ENCODE measurements at regions of chr6 and their contacts with region 1.

Region 1: GRCh38 chr6:28335564-28336283 is at the start of gene ZSCAN31:
- DNase-seq: peak; percentile 99
- ATAC-seq: peak; percentile 98
- H3K4me3 ChIP-seq: peak within 1 kb of the TSS; percentile 78 to 94 (median 80)
- H3K27ac ChIP-seq: peak within 1 kb of the TSS; percentile 96
- H3K4me1 ChIP-seq: peaks cover 25% of the 10 kb centered on the region
- H3K27me3 ChIP-seq: no peaks in the 10 kb centered on the region; a peak in 1 of 5 replicates
- CTCF ChIP-seq: no peak; the same call in 1 of the 2 replicates
- EP300 ChIP-seq: peak; percentile 18 to 34; a peak in 1 of 4 replicates
- POLR2A ChIP-seq: peak; percentile 80 to 99
- RAD21 ChIP-seq: 0 out of 2 replicates have a peak, but pooled peaks have one; percentile 17
- total RNA-seq, gene ZSCAN31: 6.2 and 7.2 TPM in 2 replicates

Region 2: GRCh38 chr6:28161410-28162079 is 174.2 kb before region 1 on chr6:
- CTCF ChIA-PET with region 1: no interaction called
- POLR2A ChIA-PET with region 1: interaction called, 12 read pairs
- in situ Hi-C with region 1: no loop called
- intact Hi-C with region 1: no loop called
- DNase-seq: peak; percentile 79
- ATAC-seq: peak; percentile 98
- H3K4me3 ChIP-seq: peak overlapping the region; percentile 65 to 82 (median 74)
- H3K27ac ChIP-seq: peak overlapping the region; percentile 50
- H3K4me1 ChIP-seq: peaks cover 13% of the 10 kb centered on the region
- H3K27me3 ChIP-seq: no peaks in the 10 kb centered on the region; a peak in 1 of 5 replicates
- CTCF ChIP-seq: peak; percentile 13; the same call in 1 of the 2 replicates
- EP300 ChIP-seq: no peak
- POLR2A ChIP-seq: peak; percentile 92 to 99
- RAD21 ChIP-seq: peak; percentile 56

Region 3: DNA sequence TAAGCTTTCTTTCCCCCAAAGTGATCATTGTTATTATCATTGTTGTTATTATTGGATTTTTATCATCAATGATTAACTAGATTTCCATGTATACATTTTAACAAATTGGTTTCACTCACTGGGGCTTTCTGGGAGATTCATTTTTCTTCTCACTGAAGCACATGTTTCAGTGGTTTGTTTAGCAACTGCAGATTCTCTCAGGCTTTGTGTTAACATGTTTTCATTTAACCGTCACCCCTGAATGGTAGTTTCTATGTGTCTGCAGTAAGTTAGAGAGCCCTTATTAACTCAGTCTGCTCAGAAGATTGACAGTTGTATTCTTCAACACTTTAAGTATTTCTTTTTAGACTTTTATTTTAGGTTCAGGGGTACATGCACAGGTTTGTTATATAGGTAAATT is 96.1 kb before region 1 on chr6:
- CTCF ChIA-PET with region 1: no interaction called
- POLR2A ChIA-PET with region 1: no interaction called
- in situ Hi-C with region 1: no loop called
- intact Hi-C with region 1: no loop called
- DNase-seq: no peak
- ATAC-seq: no peak
- H3K4me3 ChIP-seq: no peak overlapping the region
- H3K27ac ChIP-seq: no peak overlapping the region
- H3K4me1 ChIP-seq: no peaks in the 10 kb centered on the region
- H3K27me3 ChIP-seq: no peaks in the 10 kb centered on the region
- CTCF ChIP-seq: no peak
- EP300 ChIP-seq: no peak
- POLR2A ChIP-seq: no peak
- RAD21 ChIP-seq: no peak

Region 4: GRCh38 chr6:28281288-28282064 is 54.2 kb before region 1 on chr6 and contains the start of gene PGBD1:
- CTCF ChIA-PET with region 1: no interaction called
- POLR2A ChIA-PET with region 1: interaction called, 24 read pairs
- in situ Hi-C with region 1: no loop called
- intact Hi-C with region 1: no loop called
- DNase-seq: peak; percentile 67
- ATAC-seq: peak; percentile 99
- H3K4me3 ChIP-seq: peak within 1 kb of the TSS; percentile 79 to 94 (median 89)
- H3K27ac ChIP-seq: peak within 1 kb of the TSS; percentile 42
- H3K4me1 ChIP-seq: peaks cover 16% of the 10 kb centered on the region
- H3K27me3 ChIP-seq: no peaks in the 10 kb centered on the region; a peak in 1 of 5 replicates
- CTCF ChIP-seq: peak; percentile 39
- EP300 ChIP-seq: peak in 1 of 2 experiments; percentile 5; a peak in 1 of 4 replicates
- POLR2A ChIP-seq: peak; percentile 71 to 72
- RAD21 ChIP-seq: peak; percentile 76
- total RNA-seq, gene PGBD1: 6.9 and 8.5 TPM in 2 replicates

Region 5: GRCh38 chr6:28322661-28323060 is 13.1 kb before region 1 on chr6:
- CTCF ChIA-PET with region 1: no interaction called
- POLR2A ChIA-PET with region 1: interaction called, 108 read pairs
- in situ Hi-C with region 1: no loop called
- intact Hi-C with region 1: loop called (anchors 1 kb)
- DNase-seq: peak; percentile 62
- ATAC-seq: peak; percentile 12; the same call in 1 of the 3 replicates
- H3K4me3 ChIP-seq: no peak overlapping the region
- H3K27ac ChIP-seq: no peak overlapping the region
- H3K4me1 ChIP-seq: peaks cover 36% of the 10 kb centered on the region
- H3K27me3 ChIP-seq: no peaks in the 10 kb centered on the region
- CTCF ChIP-seq: no peak
- EP300 ChIP-seq: peak in 1 of 2 experiments; percentile 59; a peak in 2 of 4 replicates
- POLR2A ChIP-seq: no peak
- RAD21 ChIP-seq: no peak

Region 6: DNA sequence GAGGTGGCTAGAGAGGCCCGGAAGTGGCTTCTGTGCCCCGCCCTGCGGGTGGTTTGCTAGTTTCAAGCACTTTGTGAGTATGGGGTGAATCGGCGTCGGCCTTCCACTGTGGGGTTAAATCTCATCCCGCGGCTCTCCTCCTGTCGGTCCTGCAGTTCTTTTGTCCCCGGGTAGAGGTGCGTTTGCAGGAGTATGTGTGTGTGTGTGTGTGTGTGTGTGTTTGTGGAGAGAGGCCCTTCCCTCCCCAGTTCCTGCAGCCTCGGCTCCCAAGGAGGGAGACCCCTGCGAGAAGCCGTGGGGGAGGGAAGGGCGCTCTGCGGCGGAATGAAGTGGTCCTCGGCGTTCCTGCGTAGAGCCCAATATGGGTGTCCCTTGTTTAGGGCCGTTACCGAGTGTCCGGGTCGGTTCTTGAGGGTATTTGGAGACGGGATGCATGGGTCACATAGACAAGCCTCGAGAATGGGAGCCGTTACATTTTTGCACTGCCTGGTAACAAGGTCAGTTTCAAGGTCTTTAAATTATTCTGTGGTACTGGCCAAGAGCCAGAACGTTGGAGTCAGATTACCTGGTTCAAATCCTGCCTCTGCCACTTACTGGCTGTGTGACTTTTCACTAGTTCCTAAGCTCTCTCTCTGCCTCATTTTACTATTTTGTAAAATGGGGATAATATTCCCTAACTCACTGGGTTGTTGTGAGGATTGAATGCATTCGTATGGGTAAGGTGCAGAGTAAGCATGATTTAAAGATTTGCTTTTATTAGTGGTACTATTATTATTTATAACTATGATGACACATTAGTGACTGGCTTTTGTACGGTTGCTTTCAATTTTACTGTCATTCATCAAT is 14.4 kb after region 1 on chr6 and contains the start of gene ZKSCAN3:
- CTCF ChIA-PET with region 1: no interaction called
- POLR2A ChIA-PET with region 1: interaction called, 38 read pairs
- in situ Hi-C with region 1: no loop called
- intact Hi-C with region 1: loop called (anchors 1 kb)
- DNase-seq: peak; percentile 84
- ATAC-seq: peak; percentile 97
- H3K4me3 ChIP-seq: peak within 1 kb of the TSS; percentile 63 to 98 (median 85)
- H3K27ac ChIP-seq: peak within 1 kb of the TSS; percentile 77
- H3K4me1 ChIP-seq: peaks cover 32% of the 10 kb centered on the region
- H3K27me3 ChIP-seq: no peaks in the 10 kb centered on the region; a peak in 1 of 5 replicates
- CTCF ChIP-seq: 0 out of 2 replicates have a peak, but pooled peaks have one; percentile 19
- EP300 ChIP-seq: no peak
- POLR2A ChIP-seq: peak; percentile 81 to 88
- RAD21 ChIP-seq: peak; percentile 27; the same call in 1 of the 2 replicates
- total RNA-seq, gene ZKSCAN3: 7.4 and 8.1 TPM in 2 replicates

Region 7: DNA sequence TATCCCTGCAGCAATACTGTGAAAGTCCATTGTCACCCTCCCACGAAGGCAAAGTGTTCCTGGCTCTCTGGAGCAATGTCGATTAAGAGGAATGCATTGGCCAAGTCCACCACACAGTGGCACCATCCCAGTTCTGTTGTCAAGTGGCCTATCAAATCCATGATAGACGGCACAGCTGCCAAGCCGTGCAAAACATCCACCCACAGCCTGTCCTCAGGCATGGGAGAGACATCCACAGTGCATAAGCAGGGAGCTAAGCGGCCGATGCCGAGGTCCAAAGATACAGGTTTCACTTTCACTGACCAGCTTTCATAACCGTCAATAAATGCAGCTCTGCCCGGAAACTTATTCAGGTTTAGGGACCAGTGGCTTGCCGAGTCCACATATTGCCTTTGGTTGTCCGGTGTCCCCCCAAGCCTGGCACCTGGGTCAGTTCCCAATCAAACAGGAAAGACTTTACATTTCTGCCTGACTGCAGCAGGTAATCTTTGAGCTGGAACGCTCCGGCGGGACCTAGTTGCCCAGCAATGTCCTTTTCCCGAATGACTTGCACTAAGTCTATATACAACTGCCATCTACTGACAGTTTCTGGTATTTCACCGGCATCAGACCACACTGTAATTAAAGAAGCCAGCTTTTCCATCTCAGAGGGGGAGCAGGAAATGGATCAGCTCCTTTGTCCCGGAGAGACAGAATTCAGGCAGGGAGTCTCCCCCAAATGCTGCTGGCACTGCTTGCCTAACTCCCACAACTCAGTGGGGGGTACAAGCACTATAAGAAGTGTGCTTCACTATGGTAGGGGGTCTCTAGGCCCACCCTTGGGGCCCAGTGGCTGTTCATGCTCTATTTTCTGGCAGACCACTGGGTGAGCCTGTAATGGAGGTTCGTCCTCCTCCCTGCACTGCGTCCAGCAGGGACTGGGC is 20.3 kb after region 1 on chr6:
- CTCF ChIA-PET with region 1: no interaction called
- POLR2A ChIA-PET with region 1: interaction called, 35 read pairs
- in situ Hi-C with region 1: no loop called
- intact Hi-C with region 1: no loop called
- DNase-seq: peak; percentile 90
- ATAC-seq: peak; percentile 89
- H3K4me3 ChIP-seq: peak overlapping the region; percentile 70 to 82 (median 77)
- H3K27ac ChIP-seq: peak overlapping the region; percentile 75
- H3K4me1 ChIP-seq: peaks cover 33% of the 10 kb centered on the region
- H3K27me3 ChIP-seq: no peaks in the 10 kb centered on the region; a peak in 1 of 5 replicates
- CTCF ChIP-seq: peak; percentile 91
- EP300 ChIP-seq: no peak
- POLR2A ChIP-seq: peak in 1 of 2 experiments; percentile 65; a peak in 1 of 4 replicates
- RAD21 ChIP-seq: peak; percentile 81

Region 8: DNA sequence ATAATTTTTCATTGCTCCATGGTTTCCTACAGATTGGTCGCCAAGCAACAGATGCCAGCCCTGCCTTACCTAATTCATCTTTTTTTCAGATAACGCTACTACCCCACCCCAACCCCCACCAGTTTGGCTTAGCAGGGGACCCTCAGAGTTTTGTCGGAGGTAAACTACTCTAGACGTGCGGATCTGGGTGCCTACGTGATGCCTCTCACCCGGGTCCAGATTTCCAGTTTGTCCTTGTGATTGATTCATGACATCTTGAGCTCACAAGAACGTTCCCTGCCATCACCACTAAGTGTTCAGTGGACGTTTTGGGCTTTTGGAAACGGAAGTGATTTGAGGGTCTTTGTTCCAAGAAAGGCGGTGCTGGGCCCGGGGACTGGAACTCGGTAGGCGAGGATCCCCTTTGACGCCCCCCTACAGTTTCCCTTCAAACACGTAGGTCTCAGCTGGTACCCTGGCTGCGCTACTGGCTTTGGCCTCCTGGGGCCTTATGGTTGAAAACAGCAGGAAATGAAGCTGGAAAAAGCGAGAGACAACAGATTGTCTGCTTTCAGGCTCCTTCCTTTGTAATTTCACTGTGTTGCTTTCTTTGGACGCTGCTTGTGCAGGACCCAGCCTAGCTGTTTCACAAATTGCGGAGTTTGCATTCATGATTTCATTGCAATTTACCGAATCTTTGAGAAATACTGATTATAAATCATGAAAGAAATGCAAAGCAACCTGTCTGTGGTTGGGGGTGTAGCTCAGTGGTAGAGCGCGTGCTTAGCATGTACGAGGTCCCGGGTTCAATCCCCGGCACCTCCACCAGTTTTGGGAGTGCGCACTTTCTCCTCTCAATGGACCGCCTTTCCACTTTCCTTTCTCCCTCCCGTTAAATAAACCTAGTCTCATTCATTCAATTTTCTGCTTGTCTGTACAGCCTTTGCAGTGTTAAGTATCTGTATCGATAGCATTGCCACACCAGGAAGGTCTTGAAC is 271.0 kb after region 1 on chr6:
- CTCF ChIA-PET with region 1: no interaction called
- POLR2A ChIA-PET with region 1: no interaction called
- in situ Hi-C with region 1: no loop called
- intact Hi-C with region 1: no loop called
- DNase-seq: peak; percentile 83
- ATAC-seq: peak; percentile 98
- H3K4me3 ChIP-seq: peak overlapping the region; percentile 57 to 69 (median 68)
- H3K27ac ChIP-seq: no peak overlapping the region
- H3K4me1 ChIP-seq: peaks cover 21% of the 10 kb centered on the region
- H3K27me3 ChIP-seq: 0 out of 5 replicates have a peak, but pooled peaks cover 0 to 4% of the 10 kb centered on the region in 2 experiments
- CTCF ChIP-seq: peak; percentile 40
- EP300 ChIP-seq: no peak
- POLR2A ChIP-seq: no peak
- RAD21 ChIP-seq: no peak

Measured in HepG2 (cell line).